H1 (cell line): ENCODE measurements at regions of chr3 and their contacts with region 1.

Region 1: DNA sequence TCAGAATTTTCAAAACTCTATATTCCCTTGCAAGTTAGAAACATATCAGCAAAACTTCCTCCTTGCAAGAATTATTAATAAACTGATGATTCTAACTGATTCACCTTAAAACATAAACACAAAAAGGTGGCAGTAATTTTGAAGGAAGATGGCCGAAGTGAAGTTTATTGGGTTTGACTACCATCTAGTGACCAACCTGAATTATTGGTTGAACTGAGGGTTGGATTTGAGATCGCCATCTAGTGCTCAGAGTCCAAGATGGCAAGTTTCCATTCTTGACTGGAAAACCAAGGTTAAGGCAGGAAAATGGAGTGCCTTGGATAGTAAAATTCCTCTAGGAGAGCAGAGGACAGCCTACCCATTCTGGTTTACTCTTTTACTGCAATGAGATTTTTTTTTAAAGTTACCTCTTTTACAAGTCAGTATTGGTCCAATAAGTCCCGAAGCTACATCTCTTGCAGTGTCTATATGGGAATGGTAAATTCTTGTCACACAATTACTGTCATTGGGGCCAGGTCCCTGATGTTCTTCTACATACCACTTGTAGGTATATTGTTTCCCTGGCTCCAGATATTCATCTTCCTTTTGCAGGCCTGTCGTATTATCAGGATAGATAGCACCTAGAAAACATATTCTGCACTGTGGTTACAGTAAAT is 51.6 kb upstream of the CP start:
- DNase-seq: peak in 1 of 2 experiments; percentile 56
- H3K4me3 ChIP-seq: no peak overlapping the region
- H3K27ac ChIP-seq: no peak overlapping the region
- H3K4me1 ChIP-seq: no peaks in the 10 kb centered on the region; a peak in 1 of 7 replicates
- H3K27me3 ChIP-seq: no peaks in the 10 kb centered on the region
- CTCF ChIP-seq: peak in 2 of 3 experiments; percentile 99 to 100; a peak in 3 of 4 replicates
- EP300 ChIP-seq: no peak
- POLR2A ChIP-seq: no peak
- RAD21 ChIP-seq: peak; percentile 100

Region 2: DNA sequence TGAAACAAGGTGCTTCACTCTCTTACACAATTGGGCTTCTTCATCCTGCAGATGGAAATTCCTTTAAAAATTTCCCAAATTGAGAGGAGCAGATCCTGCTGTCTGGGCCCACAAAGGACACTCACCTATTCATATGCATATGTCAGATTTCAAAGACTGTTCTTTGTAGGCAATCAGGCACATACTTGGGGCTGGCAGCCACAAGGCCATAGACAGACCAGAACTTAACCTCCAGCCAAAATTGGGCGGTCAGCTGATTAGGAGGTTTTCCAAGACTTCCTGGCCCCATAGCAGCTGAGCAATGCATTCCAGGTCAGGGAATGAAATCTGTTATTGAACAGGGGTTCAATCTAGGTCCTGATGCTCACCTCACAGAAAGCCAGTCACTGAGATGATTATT is 158.8 kb before region 1 on chr3:
- CTCF ChIA-PET with region 1: interaction called, 50 read pairs
- POLR2A ChIA-PET with region 1: no interaction called
- DNase-seq: no peak
- H3K4me3 ChIP-seq: no peak overlapping the region
- H3K27ac ChIP-seq: no peak overlapping the region
- H3K4me1 ChIP-seq: peaks cover 0 to 6% (median 2%) of the 10 kb centered on the region in 4 experiments; a peak in 4 of 7 replicates
- H3K27me3 ChIP-seq: no peaks in the 10 kb centered on the region
- CTCF ChIP-seq: no peak
- EP300 ChIP-seq: no peak
- POLR2A ChIP-seq: no peak
- RAD21 ChIP-seq: no peak

Region 3: DNA sequence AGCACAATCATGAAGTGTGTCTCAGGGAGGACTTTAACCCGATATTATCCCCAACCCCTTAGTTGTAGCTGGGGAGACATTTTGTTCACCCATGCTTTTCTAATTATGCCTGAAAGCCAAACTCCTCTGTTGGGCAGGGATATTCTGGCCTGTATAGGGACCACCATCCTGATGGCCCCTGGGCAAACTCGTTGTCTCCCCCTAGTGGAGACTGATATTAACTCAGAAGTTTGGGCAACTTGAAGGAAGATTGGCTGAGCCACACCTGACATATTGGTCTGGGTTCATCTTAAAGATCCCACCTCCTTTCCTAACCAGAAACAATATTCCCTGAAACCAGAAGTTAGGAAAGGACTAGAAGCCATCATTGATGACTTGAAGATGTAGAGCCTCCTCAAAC is 18.0 kb after region 1 on chr3:
- CTCF ChIA-PET with region 1: interaction called, 28 read pairs
- POLR2A ChIA-PET with region 1: no interaction called
- DNase-seq: no peak
- H3K4me3 ChIP-seq: no peak overlapping the region
- H3K27ac ChIP-seq: no peak overlapping the region
- H3K4me1 ChIP-seq: no peaks in the 10 kb centered on the region
- H3K27me3 ChIP-seq: no peaks in the 10 kb centered on the region
- CTCF ChIP-seq: peak; percentile 47 to 74 (median 57)
- EP300 ChIP-seq: no peak
- POLR2A ChIP-seq: no peak
- RAD21 ChIP-seq: peak; percentile 47 to 56

Region 4: DNA sequence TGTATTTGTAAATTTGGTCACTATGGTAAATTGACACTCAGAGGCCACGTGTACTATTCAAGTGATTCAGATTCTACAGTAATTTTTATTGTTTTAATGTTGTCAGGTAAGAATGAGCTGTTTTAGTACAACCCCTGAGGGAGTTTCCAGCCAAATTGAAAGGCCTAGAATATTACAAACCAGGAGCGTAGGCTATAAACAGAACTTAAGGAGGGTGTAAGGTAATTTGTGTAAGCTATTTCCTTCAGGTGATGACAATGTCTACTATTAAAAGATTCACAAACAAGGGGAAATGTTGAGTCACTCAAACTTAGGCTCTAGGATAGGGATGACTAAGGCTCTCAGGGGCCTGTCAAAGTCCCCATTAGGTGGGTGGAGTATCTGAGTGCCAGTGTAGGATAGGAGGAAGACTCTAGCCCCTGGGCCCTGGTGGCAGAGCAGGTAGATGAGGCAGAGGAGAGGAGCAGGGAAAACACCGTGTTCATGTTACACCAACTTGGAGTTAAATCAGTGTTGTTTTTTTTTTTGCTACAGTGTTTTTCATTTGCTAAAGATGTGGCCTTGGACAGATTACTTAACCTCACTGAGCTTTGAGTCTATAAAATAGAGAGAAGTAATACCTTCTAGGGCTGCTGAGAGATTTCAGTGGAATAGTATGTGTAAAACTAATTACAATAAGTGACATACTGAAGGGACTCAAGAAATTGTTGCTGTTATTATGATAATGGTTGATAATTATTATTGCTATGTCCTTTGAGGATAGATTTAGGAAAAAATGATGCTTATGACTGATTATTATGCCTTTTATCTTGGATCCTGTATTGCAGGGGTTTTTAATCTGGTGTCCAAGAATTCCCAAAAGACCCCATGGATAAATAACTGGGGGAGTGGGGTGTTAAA is 94.0 kb after region 1 on chr3:
- CTCF ChIA-PET with region 1: no interaction called
- POLR2A ChIA-PET with region 1: no interaction called
- DNase-seq: no peak
- H3K4me3 ChIP-seq: no peak overlapping the region
- H3K27ac ChIP-seq: no peak overlapping the region
- H3K4me1 ChIP-seq: peaks cover 1 to 24% (median 20%) of the 10 kb centered on the region in 4 experiments
- H3K27me3 ChIP-seq: no peaks in the 10 kb centered on the region
- CTCF ChIP-seq: no peak
- EP300 ChIP-seq: no peak
- POLR2A ChIP-seq: no peak
- RAD21 ChIP-seq: no peak